ENCODE measurements at regions of chr17 and their contacts with region 1.

Region 1: DNA sequence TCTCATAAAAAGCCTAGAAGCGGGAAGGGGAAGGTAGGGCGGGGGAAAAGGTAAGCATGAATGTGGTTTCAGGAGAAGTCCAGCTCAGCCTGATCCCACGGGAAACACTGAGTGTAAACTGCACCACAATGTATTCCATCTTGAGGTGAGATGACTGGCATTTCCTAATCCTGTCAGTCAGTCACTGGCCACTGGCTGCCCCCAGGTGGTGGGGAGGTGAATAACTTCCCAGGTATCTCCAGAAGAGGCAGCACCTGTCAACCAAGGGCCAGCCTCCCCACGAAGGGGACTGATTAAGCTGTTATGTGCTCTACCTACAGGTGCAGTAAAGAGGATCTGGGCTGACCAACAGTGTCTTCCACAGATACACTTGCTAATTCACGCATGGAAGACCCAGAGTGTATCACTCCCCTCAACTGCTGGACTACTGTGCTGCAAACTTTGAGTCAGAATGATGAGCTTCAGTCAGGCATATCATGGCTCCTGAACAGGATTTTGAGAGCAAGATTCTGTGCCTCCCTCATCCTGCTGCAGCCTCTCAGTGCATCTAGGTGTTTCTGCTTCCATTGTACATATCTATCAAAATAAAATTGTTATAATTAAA is 108.5 kb upstream of the CCL2 start:
- DNase-seq: peak; percentile 53
- H3K4me3 Mint-ChIP-seq: no peak overlapping the region
- H3K27ac Mint-ChIP-seq: no peak overlapping the region
- H3K4me1 Mint-ChIP-seq: no peaks in the 10 kb centered on the region
- H3K27me3 Mint-ChIP-seq: peaks cover 5% of the 10 kb centered on the region

Region 2: GRCh38 chr17:33779225-33779591 is 367.3 kb before region 1 on chr17:
- intact Hi-C with region 1: loop called (anchors 1 kb)
- DNase-seq: no peak
- H3K4me3 Mint-ChIP-seq: no peak overlapping the region
- H3K27ac Mint-ChIP-seq: no peak overlapping the region
- H3K4me1 Mint-ChIP-seq: no peaks in the 10 kb centered on the region
- H3K27me3 Mint-ChIP-seq: peaks cover 7% of the 10 kb centered on the region

Region 3: DNA sequence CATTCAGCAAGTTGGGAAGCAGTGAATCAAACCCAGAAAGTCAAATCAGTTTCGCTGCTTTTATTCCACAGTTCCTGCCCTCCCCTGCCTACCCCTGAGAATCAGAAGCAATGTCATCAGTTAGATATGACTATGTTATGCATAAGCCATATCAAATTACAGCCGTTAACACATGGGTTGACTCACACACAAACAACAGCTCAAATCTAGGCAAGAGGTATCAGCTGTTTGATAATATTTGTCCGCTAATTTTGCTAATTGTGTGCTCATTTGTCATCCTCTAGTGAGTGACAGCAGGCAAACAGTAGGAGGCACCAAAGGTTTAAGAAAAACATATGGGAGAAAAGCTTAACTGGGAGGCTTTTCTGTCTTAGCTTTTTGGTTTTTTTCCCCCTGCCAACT is 218.8 kb before region 1 on chr17:
- intact Hi-C with region 1: loop called (anchors 1 kb)
- DNase-seq: no peak
- H3K4me3 Mint-ChIP-seq: no peak overlapping the region
- H3K27ac Mint-ChIP-seq: no peak overlapping the region
- H3K4me1 Mint-ChIP-seq: no peaks in the 10 kb centered on the region
- H3K27me3 Mint-ChIP-seq: peaks cover 6% of the 10 kb centered on the region